ENCODE measurements at regions of chr6 and their contacts with region 1.

Region 1: GRCh38 chr6:35737413-35738211 is 780 bp downstream of the ARMC12 start:
- DNase-seq: peak; percentile 77
- H3K4me3 ChIP-seq: no peak overlapping the region
- H3K27ac ChIP-seq: no peak overlapping the region
- H3K27me3 ChIP-seq: peaks cover 4% of the 10 kb centered on the region
- CTCF ChIP-seq: peak; percentile 91

Region 2: DNA sequence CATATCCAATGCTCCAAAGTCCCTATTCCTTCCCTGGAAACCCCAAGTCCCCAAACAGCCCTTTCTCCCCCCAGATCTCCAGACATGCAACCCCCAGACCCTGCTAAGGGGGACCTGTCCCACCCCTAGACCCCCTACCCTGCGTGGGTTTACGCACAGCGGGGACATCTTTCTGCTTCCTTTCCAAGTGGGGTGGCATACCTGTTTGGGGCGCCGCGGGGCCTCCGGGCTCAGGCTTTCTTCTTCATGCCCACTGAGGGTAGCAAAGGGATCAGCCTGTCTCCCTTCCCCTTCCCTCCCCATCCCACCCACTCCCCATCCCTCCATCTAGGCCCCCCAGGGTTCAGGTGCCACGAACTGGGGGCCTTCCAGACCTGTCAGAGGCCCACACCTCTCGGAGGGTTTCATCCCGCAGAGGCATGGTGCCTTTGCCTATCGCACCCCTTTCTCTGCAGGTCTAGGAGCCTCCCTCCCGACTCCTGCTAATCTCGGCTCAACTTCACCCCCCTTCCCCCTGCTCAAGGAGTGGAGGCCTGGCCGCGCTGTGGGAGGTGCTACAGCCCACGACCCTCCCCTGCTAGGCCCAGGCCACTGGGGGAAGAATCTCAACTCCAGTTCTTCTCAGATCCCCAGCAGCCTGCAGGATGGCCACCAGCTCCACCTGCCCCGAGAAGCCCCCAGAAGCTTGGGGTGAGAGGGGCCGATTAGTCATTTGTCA is 225.0 kb before region 1 on chr6 and contains the start of gene TULP1:
- CTCF ChIA-PET with region 1: interaction called, 10 read pairs
- POLR2A ChIA-PET with region 1: no interaction called
- DNase-seq: no peak
- H3K4me3 ChIP-seq: no peak within 1 kb of the TSS
- H3K27ac ChIP-seq: no peak within 1 kb of the TSS
- H3K27me3 ChIP-seq: peaks cover 48% of the 10 kb centered on the region
- CTCF ChIP-seq: no peak
- polyA plus RNA-seq, gene TULP1: not detected in 2 replicates

Region 3: DNA sequence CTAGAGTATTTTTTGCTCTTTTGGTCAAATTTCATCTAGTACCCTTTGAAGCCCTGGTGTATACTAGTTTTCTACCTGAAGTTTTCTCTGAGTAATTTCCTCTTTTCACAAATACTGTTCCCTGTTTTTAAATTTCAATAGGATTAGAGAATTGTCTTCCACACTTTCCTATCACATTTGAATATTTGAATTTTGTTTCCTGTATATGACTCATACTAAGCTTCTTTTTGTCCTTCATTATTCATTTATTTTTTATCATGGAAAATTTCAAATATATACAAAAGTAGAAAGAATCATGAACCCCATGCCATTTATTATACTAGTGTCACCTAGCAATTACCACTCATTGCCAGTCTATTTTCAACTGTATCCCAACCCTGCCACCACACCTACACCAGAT is 120.2 kb after region 1 on chr6:
- CTCF ChIA-PET with region 1: no interaction called
- POLR2A ChIA-PET with region 1: no interaction called
- DNase-seq: no peak
- H3K4me3 ChIP-seq: no peak overlapping the region
- H3K27ac ChIP-seq: no peak overlapping the region
- H3K27me3 ChIP-seq: no peaks in the 10 kb centered on the region
- CTCF ChIP-seq: no peak

Measured in AG04450 (cell line).